Activated T-helper 1 cell treated with anti-CD3 and anti-CD28 coated beads, Interleukin-12 subunit alpha, Interleukin-12 subunit beta, Interleukin-2, Interleukin-4 antibody, amounts not matched to agents 30 ng/mL and 10 ng/mL and 1 ng/mL, durations not matched to agents 14 hours and 24 hours and 36 hours (primary cell): ENCODE measurements at regions of chr17 and their contacts with region 1.

Region 1: GRCh38 chr17:4565209-4566141 is 5.1 kb upstream of the GGT6 start:
- DNase-seq: peak; percentile 38
- H3K4me3 Mint-ChIP-seq: no peak overlapping the region
- H3K27ac Mint-ChIP-seq: peak overlapping the region; percentile 13
- H3K4me1 Mint-ChIP-seq: peaks cover 48% of the 10 kb centered on the region
- H3K27me3 Mint-ChIP-seq: peaks cover 8% of the 10 kb centered on the region

Region 2: GRCh38 chr17:4215882-4216570 is 349.4 kb before region 1 on chr17:
- intact Hi-C with region 1: loop called (anchors 10 kb)
- DNase-seq: no peak
- H3K4me3 Mint-ChIP-seq: no peak overlapping the region
- H3K27ac Mint-ChIP-seq: peak overlapping the region; percentile 15
- H3K4me1 Mint-ChIP-seq: peaks cover 21% of the 10 kb centered on the region
- H3K27me3 Mint-ChIP-seq: no peaks in the 10 kb centered on the region

Region 3: GRCh38 chr17:4420692-4421131 is 144.8 kb before region 1 on chr17:
- intact Hi-C with region 1: loop called (anchors 2 kb)
- DNase-seq: peak; percentile 51
- H3K4me3 Mint-ChIP-seq: no peak overlapping the region
- H3K27ac Mint-ChIP-seq: no peak overlapping the region
- H3K4me1 Mint-ChIP-seq: no peaks in the 10 kb centered on the region
- H3K27me3 Mint-ChIP-seq: no peaks in the 10 kb centered on the region

Region 4: GRCh38 chr17:4626734-4627256 is 61.3 kb after region 1 on chr17:
- intact Hi-C with region 1: loop called (anchors 1 kb)
- DNase-seq: no peak
- H3K4me3 Mint-ChIP-seq: no peak overlapping the region
- H3K27ac Mint-ChIP-seq: no peak overlapping the region
- H3K4me1 Mint-ChIP-seq: no peaks in the 10 kb centered on the region
- H3K27me3 Mint-ChIP-seq: peaks cover 20% of the 10 kb centered on the region

Region 5: GRCh38 chr17:4796553-4796921 is 231.1 kb after region 1 on chr17:
- intact Hi-C with region 1: loop called (anchors 2 kb)
- DNase-seq: no peak
- H3K4me3 Mint-ChIP-seq: peak overlapping the region; percentile 100
- H3K27ac Mint-ChIP-seq: peak overlapping the region; percentile 99
- H3K4me1 Mint-ChIP-seq: peaks cover 7% of the 10 kb centered on the region
- H3K27me3 Mint-ChIP-seq: peaks cover 9% of the 10 kb centered on the region

Region 6: DNA sequence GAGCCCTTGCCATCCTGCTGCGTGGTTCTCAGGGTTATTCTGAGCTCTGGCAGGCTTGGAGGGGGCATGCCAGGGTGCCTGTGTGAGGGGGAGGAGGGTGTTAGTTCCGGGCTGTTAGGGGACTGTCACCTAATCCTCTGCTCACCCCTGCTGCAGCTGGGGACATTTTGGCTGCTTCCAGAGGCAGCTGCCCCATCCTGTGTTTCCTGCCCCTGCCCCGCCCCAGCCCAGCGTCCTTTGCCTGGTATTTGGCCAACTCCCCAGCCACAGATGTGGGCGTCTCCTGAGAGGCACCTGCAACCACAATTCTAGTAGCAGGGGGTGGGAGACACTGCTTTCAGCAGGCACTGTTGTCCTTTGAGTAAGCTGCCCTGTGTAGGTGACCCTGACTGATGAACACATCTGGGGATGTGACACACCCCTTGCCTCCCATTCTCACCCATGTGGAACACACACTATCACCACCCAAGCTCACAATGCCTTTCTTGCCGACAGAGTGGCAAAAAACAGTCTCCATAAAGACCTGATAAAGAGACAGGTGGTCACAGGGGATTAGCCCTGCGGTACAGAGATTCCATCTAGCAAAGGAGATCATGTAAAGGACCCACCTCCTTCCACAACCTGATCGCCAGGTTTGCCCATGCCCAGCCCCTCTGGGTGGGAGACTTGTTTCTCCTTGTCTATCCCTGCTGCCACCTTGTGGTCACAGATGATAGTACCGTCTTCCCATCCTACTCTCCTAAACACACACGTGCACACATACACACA is 337.8 kb after region 1 on chr17 and contains the start of gene CHRNE:
- intact Hi-C with region 1: loop called (anchors 5 kb)
- DNase-seq: peak; percentile 61
- H3K4me3 Mint-ChIP-seq: peak within 1 kb of the TSS; percentile 21
- H3K27ac Mint-ChIP-seq: peak within 1 kb of the TSS; percentile 52
- H3K4me1 Mint-ChIP-seq: peaks cover 25% of the 10 kb centered on the region
- H3K27me3 Mint-ChIP-seq: peaks cover 16% of the 10 kb centered on the region
- total RNA-seq, gene CHRNE: 0.52 and 0.61 TPM in 2 replicates